ENCODE measurements at regions of chr12 and their contacts with region 1.

Region 1: DNA sequence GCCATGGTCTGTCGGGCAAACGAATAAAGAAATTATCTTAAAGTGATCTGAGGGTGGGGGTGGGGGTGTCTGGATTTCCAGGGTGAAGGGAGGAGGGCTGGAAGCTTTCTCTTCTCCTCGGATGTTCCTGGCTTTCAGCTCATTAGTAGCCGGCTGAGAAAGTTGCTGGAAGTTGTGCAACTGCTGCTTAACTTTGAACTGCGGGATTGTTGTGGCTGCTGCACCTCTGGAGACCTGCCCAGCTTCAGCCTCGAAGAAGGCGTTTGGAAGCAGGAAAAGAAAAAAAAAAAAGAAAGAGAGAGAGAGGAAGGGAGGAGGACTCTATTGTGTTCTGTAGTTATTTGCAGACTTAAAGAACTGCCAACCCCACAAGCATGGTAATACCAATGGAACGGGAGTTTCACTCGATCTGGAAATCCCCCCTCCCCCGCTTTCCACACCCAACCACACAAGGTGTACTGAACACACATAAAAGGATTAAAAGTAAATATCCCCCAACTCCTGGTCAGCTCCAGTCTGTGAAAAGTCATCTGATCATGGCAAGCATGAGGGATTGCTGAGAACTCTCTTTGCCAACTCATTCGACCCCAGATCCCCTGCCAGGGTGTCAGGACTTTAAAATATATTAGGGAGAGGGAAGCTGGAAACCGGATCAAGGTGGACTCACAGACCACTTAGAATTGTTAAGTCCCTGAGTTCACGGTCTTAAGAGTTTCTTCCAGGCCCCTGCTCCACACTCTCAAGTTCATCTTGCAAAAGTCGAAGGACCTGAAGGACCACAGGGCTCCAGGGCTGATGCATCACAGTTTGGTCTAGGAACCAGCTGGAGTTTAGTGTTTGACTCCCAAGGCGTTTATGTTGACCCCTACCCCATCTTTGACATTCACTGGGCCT is at the start of gene RASSF9:
- DNase-seq: peak; percentile 84
- H3K4me3 ChIP-seq: peak within 1 kb of the TSS; percentile 5 to 89 (median 39)
- H3K27ac ChIP-seq: peak within 1 kb of the TSS; percentile 49
- H3K4me1 ChIP-seq: peaks cover 15% of the 10 kb centered on the region
- H3K27me3 ChIP-seq: no peaks in the 10 kb centered on the region
- CTCF ChIP-seq: no peak
- POLR2A ChIP-seq: no peak
- total RNA-seq, gene RASSF9: 2.3 and 3.6 TPM in 2 replicates

Region 2: GRCh38 chr12:85855305-85855704 is 18.9 kb after region 1 on chr12:
- CTCF ChIA-PET with region 1: interaction called, 5 read pairs
- POLR2A ChIA-PET with region 1: no interaction called
- dilution Hi-C with region 1: no loop called
- intact Hi-C with region 1: loop called (anchors 2 kb)
- DNase-seq: no peak
- H3K4me3 ChIP-seq: no peak overlapping the region
- H3K27ac ChIP-seq: no peak overlapping the region
- H3K4me1 ChIP-seq: no peaks in the 10 kb centered on the region
- H3K27me3 ChIP-seq: no peaks in the 10 kb centered on the region
- CTCF ChIP-seq: no peak
- POLR2A ChIP-seq: no peak

Region 3: DNA sequence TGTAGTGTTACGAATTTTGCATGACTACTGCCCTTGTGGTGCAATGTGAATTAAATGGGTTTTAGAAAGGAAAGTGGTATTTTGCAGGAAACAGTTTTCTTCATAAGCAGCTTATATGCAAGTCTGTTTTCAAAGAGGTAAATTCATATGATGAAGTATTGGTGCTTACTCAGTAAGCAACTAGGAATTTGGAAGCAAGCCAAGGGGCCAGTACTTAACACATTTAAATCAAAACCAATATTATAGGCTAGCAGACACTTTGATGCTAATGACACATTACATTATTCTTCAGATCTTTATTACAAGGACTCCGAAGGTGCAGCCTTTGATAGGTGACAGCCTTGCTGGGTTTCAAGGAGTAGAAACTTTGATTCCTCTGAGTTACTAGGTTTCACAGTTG is 396.7 kb after region 1 on chr12:
- CTCF ChIA-PET with region 1: no interaction called
- POLR2A ChIA-PET with region 1: no interaction called
- dilution Hi-C with region 1: no loop called
- intact Hi-C with region 1: no loop called
- DNase-seq: peak; percentile 49
- H3K4me3 ChIP-seq: no peak overlapping the region
- H3K27ac ChIP-seq: no peak overlapping the region
- H3K4me1 ChIP-seq: peaks cover 32% of the 10 kb centered on the region
- H3K27me3 ChIP-seq: no peaks in the 10 kb centered on the region
- CTCF ChIP-seq: no peak
- POLR2A ChIP-seq: no peak